ENCODE measurements at regions of chrX and their contacts with region 1.

Region 1: GRCh38 chrX:124388562-124388961 is 42.2 kb downstream of the SH2D1A start:
- DNase-seq: no peak
- H3K4me3 ChIP-seq: no peak overlapping the region
- H3K27ac ChIP-seq: no peak overlapping the region
- H3K4me1 ChIP-seq: peaks cover 0 to 2% (median 0%) of the 10 kb centered on the region in 4 donors
- H3K27me3 ChIP-seq: no peaks in the 10 kb centered on the region
- CTCF ChIP-seq: peak; percentile 59 to 71 (median 59)
- EP300 ChIP-seq: no peak
- POLR2A ChIP-seq: no peak

Region 2: GRCh38 chrX:124098089-124098488 is 290.5 kb before region 1 on chrX:
- intact Hi-C with region 1: loop called (anchors 5 kb)
- DNase-seq: no peak
- H3K4me3 ChIP-seq: no peak overlapping the region
- H3K27ac ChIP-seq: no peak overlapping the region
- H3K4me1 ChIP-seq: peaks cover 0 to 14% (median 4%) of the 10 kb centered on the region in 4 donors
- H3K27me3 ChIP-seq: no peaks in the 10 kb centered on the region
- CTCF ChIP-seq: peak; percentile 53 to 62 (median 57)
- EP300 ChIP-seq: no peak
- POLR2A ChIP-seq: no peak

Region 3: GRCh38 chrX:124211312-124211942 is 177.1 kb before region 1 on chrX:
- intact Hi-C with region 1: loop called (anchors 10 kb)
- DNase-seq: no peak
- H3K4me3 ChIP-seq: no peak overlapping the region
- H3K27ac ChIP-seq: no peak overlapping the region
- H3K4me1 ChIP-seq: no peaks in the 10 kb centered on the region
- H3K27me3 ChIP-seq: no peaks in the 10 kb centered on the region
- CTCF ChIP-seq: peak; percentile 43 to 54 (median 46)
- EP300 ChIP-seq: no peak
- POLR2A ChIP-seq: no peak

Region 4: DNA sequence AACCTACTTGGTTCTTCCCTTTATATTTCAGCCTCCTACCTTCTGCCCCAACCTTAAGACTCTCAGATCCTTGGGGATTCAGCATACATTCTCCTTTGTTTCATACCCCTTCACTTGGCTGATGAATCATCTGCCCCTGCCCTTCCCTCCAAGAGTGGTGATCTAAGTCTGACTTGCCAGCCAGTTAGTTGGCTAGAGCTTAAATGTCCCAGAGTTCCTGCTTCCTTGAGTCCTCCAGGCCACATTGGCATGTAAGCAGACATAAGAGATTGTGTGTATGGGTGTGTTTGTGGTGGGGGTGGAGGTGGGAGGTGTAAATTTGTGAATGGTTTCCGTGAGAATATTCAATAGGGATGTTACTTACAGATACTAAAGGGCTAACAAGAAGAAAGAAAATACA is 59.8 kb before region 1 on chrX:
- intact Hi-C with region 1: loop called (anchors 10 kb)
- DNase-seq: no peak
- H3K4me3 ChIP-seq: no peak overlapping the region
- H3K27ac ChIP-seq: no peak overlapping the region
- H3K4me1 ChIP-seq: no peaks in the 10 kb centered on the region
- H3K27me3 ChIP-seq: no peaks in the 10 kb centered on the region
- CTCF ChIP-seq: no peak
- EP300 ChIP-seq: no peak
- POLR2A ChIP-seq: no peak